MCF 10A (cell line): ENCODE measurements at regions of chr5 and their contacts with region 1.

Region 1: DNA sequence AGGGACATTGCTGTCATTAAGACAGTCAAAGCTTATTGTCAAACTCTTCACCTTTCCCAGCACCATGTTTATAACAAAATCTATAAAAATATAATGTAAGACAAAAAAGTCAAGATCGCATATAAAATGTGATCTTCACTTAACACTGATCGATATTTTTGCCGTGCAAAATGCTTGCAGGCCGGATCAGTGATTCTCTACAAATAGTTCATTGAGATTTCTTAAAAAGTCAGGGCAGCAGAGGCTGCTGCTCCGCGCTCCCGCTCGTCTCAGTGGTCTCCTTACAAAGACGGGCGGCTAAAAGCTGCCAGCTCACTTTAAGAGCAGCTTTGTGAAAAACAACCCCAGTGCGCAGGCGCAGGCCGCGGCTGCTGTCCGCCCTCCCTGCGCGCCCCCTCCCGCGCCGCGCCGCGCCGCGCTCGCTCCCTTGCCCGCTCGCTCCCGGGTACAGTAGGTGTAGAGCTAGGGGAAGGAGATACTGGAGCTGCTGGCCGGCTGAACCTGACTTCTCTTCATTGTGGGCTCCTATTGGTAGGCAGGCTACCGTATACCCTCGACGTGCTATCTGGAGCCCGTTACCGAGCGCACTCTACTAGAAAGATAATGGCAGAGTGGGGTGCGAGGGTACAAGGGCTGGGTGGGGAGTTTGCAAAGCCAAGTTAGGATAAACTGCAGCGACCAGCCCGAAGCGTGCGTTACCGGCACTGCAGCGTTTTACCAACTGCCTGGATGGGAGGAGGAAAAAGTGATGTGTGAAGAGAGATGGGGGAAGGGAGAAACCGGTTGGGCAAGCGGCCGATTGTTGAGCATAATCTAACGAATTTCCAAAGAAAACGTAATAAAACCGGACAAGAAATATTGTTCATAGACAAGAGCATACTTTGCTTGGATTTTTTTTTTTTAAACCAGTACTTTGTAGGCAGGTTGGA is at the start of gene ARRDC3:
- DNase-seq: peak; percentile 96
- H3K4me3 Mint-ChIP-seq: peak within 1 kb of the TSS; percentile 80
- H3K27ac Mint-ChIP-seq: peak within 1 kb of the TSS; percentile 99
- H3K4me1 Mint-ChIP-seq: no peaks in the 10 kb centered on the region
- H3K27me3 Mint-ChIP-seq: no peaks in the 10 kb centered on the region
- CTCF ChIP-seq: no peak
- total RNA-seq, gene ARRDC3: 35.5 and 41.6 TPM in 2 replicates

Region 2: GRCh38 chr5:90802474-90803317 is 580.6 kb before region 1 on chr5:
- CTCF ChIA-PET with region 1: interaction called, 24 read pairs
- POLR2A ChIA-PET with region 1: interaction called, 4 read pairs
- intact Hi-C with region 1: no loop called
- DNase-seq: peak; percentile 62
- H3K4me3 Mint-ChIP-seq: no peak overlapping the region
- H3K27ac Mint-ChIP-seq: no peak overlapping the region
- H3K4me1 Mint-ChIP-seq: no peaks in the 10 kb centered on the region
- H3K27me3 Mint-ChIP-seq: peaks cover 14% of the 10 kb centered on the region
- CTCF ChIP-seq: peak; percentile 65

Region 3: GRCh38 chr5:90932052-90932699 is 451.1 kb before region 1 on chr5:
- CTCF ChIA-PET with region 1: interaction called, 96 read pairs
- POLR2A ChIA-PET with region 1: interaction called, 64 read pairs
- intact Hi-C with region 1: loop called (anchors 1 kb)
- DNase-seq: peak; percentile 77
- H3K4me3 Mint-ChIP-seq: no peak overlapping the region
- H3K27ac Mint-ChIP-seq: no peak overlapping the region
- H3K4me1 Mint-ChIP-seq: peaks cover 11% of the 10 kb centered on the region
- H3K27me3 Mint-ChIP-seq: no peaks in the 10 kb centered on the region
- CTCF ChIP-seq: peak; percentile 73

Region 4: GRCh38 chr5:91101600-91102379 is 281.5 kb before region 1 on chr5:
- CTCF ChIA-PET with region 1: interaction called, 64 read pairs
- POLR2A ChIA-PET with region 1: interaction called, 48 read pairs
- intact Hi-C with region 1: loop called (anchors 1 kb)
- DNase-seq: peak; percentile 83
- H3K4me3 Mint-ChIP-seq: no peak overlapping the region
- H3K27ac Mint-ChIP-seq: no peak overlapping the region
- H3K4me1 Mint-ChIP-seq: peaks cover 25% of the 10 kb centered on the region
- H3K27me3 Mint-ChIP-seq: no peaks in the 10 kb centered on the region
- CTCF ChIP-seq: peak; percentile 87

Region 5: DNA sequence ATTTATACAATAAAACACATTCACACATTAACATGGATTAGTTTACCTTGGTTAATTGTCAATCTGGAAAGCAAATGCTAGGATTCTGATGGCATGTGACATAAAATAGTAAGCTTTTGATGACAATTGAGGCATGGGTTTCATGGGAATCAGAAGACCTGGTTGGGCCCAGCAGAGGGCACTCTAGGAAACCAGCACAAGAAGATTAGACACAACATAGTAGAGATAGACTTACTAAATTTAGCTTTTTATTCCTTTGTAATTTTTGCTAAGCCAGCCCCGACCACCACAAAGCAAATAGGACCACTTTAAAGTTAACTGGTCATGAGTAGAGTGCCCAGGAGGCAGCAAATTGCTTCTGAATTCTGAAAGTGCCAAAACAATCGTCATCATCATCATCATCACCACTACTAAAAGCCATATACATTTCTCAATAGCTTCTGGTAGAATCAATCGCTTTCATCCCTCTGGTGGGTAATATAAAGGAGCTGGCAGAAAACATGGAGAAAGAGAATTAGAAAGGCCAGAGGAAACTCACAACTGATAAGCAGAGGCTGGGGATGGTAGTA is 163.4 kb before region 1 on chr5:
- CTCF ChIA-PET with region 1: interaction called, 20 read pairs
- POLR2A ChIA-PET with region 1: interaction called, 48 read pairs
- intact Hi-C with region 1: no loop called
- DNase-seq: peak; percentile 22
- H3K4me3 Mint-ChIP-seq: no peak overlapping the region
- H3K27ac Mint-ChIP-seq: no peak overlapping the region
- H3K4me1 Mint-ChIP-seq: peaks cover 18% of the 10 kb centered on the region
- H3K27me3 Mint-ChIP-seq: no peaks in the 10 kb centered on the region
- CTCF ChIP-seq: no peak

Region 6: DNA sequence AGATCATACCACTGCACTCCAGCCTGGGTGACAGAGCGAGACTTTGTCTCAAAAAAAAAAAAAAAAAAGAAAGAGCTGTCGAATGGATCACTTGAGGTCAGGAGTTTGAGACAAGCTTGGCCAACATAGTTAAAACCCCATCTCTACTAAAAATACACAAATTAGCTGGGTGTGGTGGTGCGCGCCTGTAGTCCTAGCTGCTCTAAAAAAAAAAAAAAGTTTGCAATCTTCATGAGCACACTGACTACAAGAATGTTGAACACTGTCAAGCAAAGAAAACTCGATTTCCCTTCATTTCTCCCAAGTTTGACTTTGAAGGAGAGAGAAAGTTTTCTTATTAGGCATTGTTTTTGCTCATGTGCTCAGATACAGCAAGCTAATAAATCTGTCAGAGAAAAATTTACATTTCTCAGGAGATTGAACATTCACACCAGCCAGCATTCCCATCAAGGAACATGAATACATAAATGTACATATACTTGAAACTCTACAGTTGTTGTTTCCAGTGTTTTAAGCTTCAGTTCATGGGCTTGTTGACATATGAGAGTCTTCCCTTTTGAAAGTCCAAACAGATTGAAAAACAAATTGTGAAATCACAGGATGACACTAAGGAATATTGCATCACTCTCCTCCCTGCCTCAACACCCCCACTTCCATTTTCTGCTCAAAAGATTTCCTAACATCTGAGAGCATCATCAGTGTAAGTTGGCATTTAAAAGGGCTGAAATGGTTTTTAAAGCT is 82.0 kb before region 1 on chr5:
- CTCF ChIA-PET with region 1: interaction called, 4 read pairs
- POLR2A ChIA-PET with region 1: interaction called, 22 read pairs
- intact Hi-C with region 1: no loop called
- DNase-seq: peak; percentile 74
- H3K4me3 Mint-ChIP-seq: no peak overlapping the region
- H3K27ac Mint-ChIP-seq: peak overlapping the region; percentile 23
- H3K4me1 Mint-ChIP-seq: peaks cover 14% of the 10 kb centered on the region
- H3K27me3 Mint-ChIP-seq: no peaks in the 10 kb centered on the region
- CTCF ChIP-seq: no peak